GM10248 (cell line): ENCODE measurements at regions of chr3 and their contacts with region 1.

Region 1: GRCh38 chr3:114383875-114384557 is 90.2 kb downstream of the TIGIT start:
- DNase-seq: peak; percentile 66
- CTCF ChIP-seq: peak; percentile 90

Region 2: GRCh38 chr3:114362815-114363214 is 21.2 kb before region 1 on chr3:
- CTCF ChIA-PET with region 1: interaction called, 13 read pairs
- POLR2A ChIA-PET with region 1: no interaction called
- DNase-seq: peak; percentile 24
- CTCF ChIP-seq: peak; percentile 44

Region 3: GRCh38 chr3:114370537-114371174 is 13.4 kb before region 1 on chr3:
- CTCF ChIA-PET with region 1: interaction called, 10 read pairs
- POLR2A ChIA-PET with region 1: no interaction called
- DNase-seq: no peak
- CTCF ChIP-seq: no peak

Region 4: DNA sequence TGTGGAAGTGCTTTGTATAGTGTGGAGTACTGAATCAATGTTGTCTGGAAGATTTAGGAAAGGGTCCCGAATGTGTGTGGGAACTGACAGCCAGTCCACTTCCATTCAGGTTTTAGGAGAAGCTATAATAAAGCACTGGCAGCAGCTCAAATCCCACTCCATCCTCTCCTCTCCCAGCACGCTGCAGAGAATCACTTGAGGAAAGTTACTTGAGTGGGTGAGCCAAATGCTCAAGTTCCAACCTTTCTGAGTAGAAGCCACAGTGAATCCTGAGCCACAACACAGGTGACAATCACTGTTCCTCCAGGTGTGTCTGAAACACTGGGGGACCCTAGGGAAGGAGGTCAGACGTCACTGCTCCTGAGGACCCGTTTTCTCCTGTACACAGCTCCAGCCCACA is 16.4 kb after region 1 on chr3:
- CTCF ChIA-PET with region 1: interaction called, 28 read pairs
- POLR2A ChIA-PET with region 1: no interaction called
- DNase-seq: no peak
- CTCF ChIP-seq: no peak

Region 5: DNA sequence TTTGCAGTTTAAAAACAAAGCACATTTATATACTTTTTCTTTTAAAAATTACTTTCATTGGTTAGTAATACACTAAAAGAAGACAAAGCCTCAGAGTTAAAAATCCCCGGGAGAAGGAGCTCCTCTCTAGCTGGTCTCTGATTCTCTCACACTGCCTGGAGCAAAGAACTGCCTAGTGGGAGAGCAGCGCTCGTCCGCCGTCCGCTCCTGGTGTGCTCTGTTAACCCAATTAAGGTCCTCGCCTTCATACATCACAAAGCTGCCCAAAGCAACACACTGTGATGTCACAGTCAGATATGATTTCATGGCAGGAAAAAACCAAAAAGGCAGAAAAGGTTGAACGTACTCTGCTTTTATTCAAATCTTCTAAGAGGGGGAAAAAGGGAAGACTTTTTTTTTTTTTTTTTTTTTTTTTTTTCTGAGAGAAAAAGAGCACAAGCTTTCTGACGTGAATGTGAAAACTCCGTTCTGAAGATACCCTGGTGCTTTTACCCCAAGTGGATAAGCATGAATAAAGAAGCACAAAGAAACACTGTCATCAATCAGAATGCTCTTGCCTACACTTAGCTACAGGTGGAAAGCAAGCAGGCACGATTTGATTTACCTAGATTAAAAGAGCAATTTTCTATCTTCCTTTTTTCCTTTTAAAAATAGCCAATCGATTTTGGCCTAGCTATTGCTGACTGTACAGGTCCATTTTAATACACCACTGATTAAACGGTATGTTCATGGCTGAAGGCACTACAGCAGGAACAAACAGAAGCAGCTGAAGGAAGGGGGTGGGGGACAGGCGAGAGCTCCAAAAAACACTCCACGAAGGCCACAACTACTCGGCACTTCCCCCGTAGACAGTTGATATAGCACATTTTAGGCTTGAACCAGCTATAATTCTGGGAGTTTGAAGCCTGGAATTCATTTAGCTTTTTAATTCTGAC is 25.0 kb after region 1 on chr3:
- CTCF ChIA-PET with region 1: interaction called, 139 read pairs
- POLR2A ChIA-PET with region 1: no interaction called
- DNase-seq: no peak
- CTCF ChIP-seq: no peak

Region 6: DNA sequence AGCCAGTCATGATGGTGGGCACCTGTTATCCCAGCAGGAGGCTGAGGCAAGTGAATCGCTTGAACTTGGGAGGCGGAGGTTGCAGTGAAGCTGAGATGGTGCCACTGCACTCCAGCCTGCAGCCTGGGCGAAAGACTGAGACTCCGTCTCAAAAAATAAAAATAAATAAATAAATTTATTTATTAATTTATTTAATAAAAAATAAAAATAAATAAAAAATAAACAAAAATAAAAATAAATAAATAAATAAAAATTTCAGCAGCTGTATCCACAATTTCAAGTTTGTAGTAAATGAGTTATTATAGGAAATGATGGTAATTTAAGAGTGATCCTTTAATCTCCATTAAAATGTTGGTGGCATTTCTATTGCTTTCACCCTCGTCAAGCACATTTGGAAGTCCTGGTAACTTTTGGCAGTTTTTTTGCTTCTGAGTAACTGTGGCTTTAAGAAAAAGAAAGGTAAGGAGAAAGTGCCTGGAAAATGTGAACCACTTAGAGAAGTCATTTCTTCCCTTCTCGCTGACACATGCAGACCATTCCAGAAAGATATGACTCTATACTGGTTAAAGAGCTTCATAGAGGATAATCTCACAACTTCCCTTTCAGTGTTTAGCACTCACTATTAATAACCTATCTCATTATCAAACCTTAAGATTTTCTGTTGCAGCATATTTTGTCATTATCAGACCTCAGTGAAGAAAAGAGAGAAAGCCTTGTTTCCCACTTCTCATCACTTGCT is 206.5 kb after region 1 on chr3:
- CTCF ChIA-PET with region 1: no interaction called
- POLR2A ChIA-PET with region 1: no interaction called
- DNase-seq: no peak
- CTCF ChIP-seq: no peak